SK-N-SH (cell line): ENCODE measurements at regions of chr16 and their contacts with region 1.

Region 1: DNA sequence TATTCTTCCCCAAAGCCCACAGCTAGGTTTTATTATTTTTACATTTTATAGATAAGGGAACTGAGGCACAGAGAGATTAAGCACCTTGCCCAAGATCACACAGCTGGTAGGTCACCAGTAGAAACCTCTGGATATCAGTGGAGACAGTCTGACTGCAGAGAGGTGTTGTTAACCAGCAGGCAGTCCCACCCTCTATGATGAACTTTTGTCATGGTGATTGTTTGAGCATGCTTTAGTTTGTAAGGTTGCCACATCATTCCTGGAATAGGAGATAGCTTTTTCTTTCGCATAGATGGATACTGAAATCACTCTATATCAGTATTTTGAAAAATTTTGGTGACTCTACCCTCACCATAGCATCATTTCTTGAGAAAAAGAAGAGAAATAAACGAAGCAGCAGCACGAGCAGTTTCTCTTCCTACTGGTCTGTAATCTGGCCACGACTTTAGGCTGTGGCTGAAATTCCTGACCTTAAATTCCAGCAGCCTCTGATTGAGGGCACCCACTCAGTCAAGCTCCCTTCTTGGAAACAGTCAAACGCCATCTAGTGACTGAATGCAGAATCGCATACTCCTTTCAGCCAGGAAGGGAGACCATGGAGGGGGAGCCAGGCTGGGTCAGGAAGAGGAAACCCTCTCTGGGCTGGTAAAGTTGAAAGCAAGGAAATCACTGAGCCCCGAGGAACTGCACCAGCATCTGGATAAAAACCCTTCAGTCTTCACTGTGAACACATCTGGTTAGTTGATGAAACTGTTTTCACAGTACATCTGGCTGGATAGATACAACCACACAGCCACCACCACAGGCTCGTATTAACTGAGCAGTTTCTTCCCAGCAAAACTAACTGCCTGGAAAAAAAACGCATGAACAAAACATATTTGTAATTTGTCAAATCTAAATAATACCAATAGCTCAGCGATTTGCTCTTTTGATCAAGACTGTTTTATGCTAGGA is 108.4 kb upstream of the XYLT1 start:
- DNase-seq: peak; percentile 66
- H3K4me3 ChIP-seq: peak overlapping the region in 1 of 2 experiments; percentile 15; a peak in 1 of 4 replicates
- H3K27ac ChIP-seq: peak overlapping the region in 1 of 2 experiments; percentile 62; a peak in 2 of 4 replicates
- H3K4me1 ChIP-seq: peaks cover 0 to 10% of the 10 kb centered on the region in 2 experiments; a peak in 1 of 4 replicates
- H3K27me3 ChIP-seq: no peaks in the 10 kb centered on the region
- CTCF ChIP-seq: peak; percentile 91
- EP300 ChIP-seq: no peak
- RAD21 ChIP-seq: peak; percentile 77

Region 2: GRCh38 chr16:17224879-17225281 is 354.3 kb before region 1 on chr16:
- CTCF ChIA-PET with region 1: no interaction called
- POLR2A ChIA-PET with region 1: no interaction called
- DNase-seq: no peak
- H3K4me3 ChIP-seq: no peak overlapping the region
- H3K27ac ChIP-seq: peak overlapping the region in 1 of 2 experiments; percentile 48; a peak in 1 of 4 replicates
- H3K4me1 ChIP-seq: peaks cover 0 to 28% of the 10 kb centered on the region in 2 experiments; a peak in 2 of 4 replicates
- H3K27me3 ChIP-seq: no peaks in the 10 kb centered on the region
- CTCF ChIP-seq: no peak
- EP300 ChIP-seq: no peak
- RAD21 ChIP-seq: no peak

Region 3: DNA sequence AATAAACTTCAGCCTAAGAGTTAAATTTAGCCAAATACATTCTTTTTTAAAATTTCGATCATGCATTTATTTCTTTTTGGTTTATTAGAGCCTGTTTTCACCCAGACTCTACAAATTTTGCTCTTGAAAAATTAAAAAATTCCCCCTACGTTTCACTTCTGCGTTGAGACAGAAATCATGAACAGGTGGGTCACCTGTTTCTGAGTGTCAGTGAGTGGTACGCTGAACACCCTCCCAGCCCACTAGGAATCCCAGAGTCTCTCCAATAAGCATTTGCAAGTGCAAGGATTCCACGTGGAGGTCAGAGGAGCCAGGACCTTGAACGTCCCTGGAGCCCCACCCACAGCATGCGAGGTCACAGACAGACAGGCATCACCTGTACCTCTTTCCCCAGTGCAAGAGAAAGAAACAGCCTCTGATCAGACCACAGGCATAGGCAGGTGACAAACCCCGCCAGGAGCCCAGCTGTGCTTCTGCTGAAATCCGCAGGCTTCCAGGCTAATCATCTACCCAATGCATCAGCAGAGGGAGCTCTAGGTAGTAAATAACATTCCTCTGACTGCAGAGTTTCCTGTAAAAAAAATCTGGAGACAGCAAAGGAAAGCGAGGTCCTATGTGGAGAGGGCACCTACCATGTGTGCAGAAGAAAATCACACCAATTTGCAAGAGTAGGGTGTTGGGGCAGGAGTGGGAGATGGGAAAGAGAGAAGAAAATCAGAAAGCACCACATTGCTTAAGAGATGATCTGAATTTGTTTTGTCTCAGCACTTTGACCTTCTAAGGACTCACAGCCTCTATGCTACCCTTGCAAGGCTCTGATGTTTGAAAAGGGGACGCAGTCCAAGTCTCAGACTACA is 102.6 kb before region 1 on chr16:
- CTCF ChIA-PET with region 1: interaction called, 23 read pairs
- POLR2A ChIA-PET with region 1: no interaction called
- DNase-seq: peak; percentile 79
- H3K4me3 ChIP-seq: no peak overlapping the region
- H3K27ac ChIP-seq: peak overlapping the region in 1 of 2 experiments; percentile 54; a peak in 1 of 4 replicates
- H3K4me1 ChIP-seq: peaks cover 13 to 17% of the 10 kb centered on the region in 2 experiments; a peak in 2 of 4 replicates
- H3K27me3 ChIP-seq: no peaks in the 10 kb centered on the region
- CTCF ChIP-seq: peak; percentile 78
- EP300 ChIP-seq: no peak; a peak in 2 of 4 replicates
- RAD21 ChIP-seq: peak; percentile 91

Region 4: DNA sequence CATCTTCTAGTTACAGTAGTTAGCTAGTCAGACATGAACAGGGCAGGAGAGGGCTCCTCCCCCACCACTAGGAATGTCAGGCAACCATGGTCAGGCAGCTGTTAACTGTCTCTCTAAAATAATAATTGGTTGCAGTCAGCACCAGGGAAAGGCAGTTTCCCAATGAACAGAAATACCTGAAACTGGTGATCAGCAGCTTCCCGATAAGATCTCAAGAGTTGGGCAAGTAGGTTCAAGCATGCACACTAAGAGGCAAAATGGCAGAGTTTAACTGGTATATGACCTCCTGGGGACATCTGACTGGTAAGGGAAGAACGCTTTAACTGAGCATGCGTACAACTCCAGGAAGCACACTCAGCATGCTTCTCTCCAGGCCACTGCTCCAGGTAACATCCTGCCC is 95.8 kb before region 1 on chr16:
- CTCF ChIA-PET with region 1: interaction called, 23 read pairs
- POLR2A ChIA-PET with region 1: no interaction called
- DNase-seq: no peak
- H3K4me3 ChIP-seq: no peak overlapping the region
- H3K27ac ChIP-seq: no peak overlapping the region
- H3K4me1 ChIP-seq: peaks cover 0 to 13% of the 10 kb centered on the region in 2 experiments; a peak in 1 of 4 replicates
- H3K27me3 ChIP-seq: no peaks in the 10 kb centered on the region
- CTCF ChIP-seq: no peak
- EP300 ChIP-seq: no peak
- RAD21 ChIP-seq: no peak

Region 5: GRCh38 chr16:17556276-17557052 is 22.7 kb before region 1 on chr16:
- CTCF ChIA-PET with region 1: interaction called, 21 read pairs
- POLR2A ChIA-PET with region 1: no interaction called
- DNase-seq: peak; percentile 58
- H3K4me3 ChIP-seq: no peak overlapping the region
- H3K27ac ChIP-seq: peak overlapping the region; percentile 11 to 89; a peak in 3 of 4 replicates
- H3K4me1 ChIP-seq: peaks cover 8 to 16% of the 10 kb centered on the region in 2 experiments; a peak in 3 of 4 replicates
- H3K27me3 ChIP-seq: no peaks in the 10 kb centered on the region
- CTCF ChIP-seq: peak; percentile 80
- EP300 ChIP-seq: no peak
- RAD21 ChIP-seq: peak; percentile 73

Region 6: DNA sequence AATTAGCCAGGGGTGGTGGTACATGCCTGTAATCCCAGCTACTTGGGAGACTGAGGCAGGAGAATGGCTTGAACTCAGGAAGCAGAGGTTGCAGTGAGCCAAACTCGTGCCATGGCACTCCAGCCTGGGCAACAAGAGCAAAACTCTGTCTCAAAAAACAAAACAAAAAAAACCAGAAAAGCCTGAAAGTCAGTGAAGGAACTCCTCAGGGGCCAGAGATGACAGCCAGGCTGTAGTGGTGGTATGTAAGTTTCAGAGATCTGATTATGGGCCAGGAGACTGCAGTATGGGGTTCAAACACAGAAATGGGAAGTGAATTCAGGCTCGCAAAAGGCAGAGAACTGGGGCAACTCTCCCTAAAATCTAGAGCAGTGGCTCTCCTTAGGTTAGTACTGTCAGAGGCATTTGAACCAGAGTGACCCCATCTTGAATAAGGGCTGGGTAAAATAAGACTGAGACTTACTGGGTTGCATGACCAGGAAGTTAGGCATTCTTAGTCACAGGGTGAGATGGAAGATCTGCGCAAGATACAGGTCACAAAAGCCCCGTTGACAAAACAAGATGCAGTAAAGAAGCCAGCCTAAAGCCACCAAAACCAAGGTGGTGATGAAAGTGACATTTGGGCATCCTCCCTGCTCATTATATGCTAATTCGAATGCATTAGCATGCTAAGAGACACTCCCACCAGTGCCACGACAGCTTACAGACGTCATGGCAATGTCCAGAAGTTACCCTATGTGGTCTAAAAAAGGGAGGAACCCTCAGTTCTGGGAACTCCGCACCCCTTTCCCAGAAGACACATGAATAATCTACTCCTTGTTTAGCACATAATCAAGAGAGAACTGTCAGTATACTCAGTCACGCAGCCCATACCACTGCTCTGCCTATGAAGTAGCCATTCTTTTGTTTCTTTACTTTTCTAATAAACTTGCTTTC is 11.8 kb after region 1 on chr16:
- CTCF ChIA-PET with region 1: interaction called, 33 read pairs
- POLR2A ChIA-PET with region 1: no interaction called
- DNase-seq: no peak
- H3K4me3 ChIP-seq: no peak overlapping the region
- H3K27ac ChIP-seq: peak overlapping the region; percentile 68 to 100
- H3K4me1 ChIP-seq: peaks cover 10 to 34% of the 10 kb centered on the region in 2 experiments
- H3K27me3 ChIP-seq: no peaks in the 10 kb centered on the region
- CTCF ChIP-seq: no peak
- EP300 ChIP-seq: no peak
- RAD21 ChIP-seq: no peak

Region 7: GRCh38 chr16:17628983-17629382 is 49.8 kb after region 1 on chr16:
- CTCF ChIA-PET with region 1: no interaction called
- POLR2A ChIA-PET with region 1: no interaction called
- DNase-seq: no peak
- H3K4me3 ChIP-seq: no peak overlapping the region
- H3K27ac ChIP-seq: no peak overlapping the region
- H3K4me1 ChIP-seq: peaks cover 0 to 2% of the 10 kb centered on the region in 2 experiments; a peak in 1 of 4 replicates
- H3K27me3 ChIP-seq: no peaks in the 10 kb centered on the region
- CTCF ChIP-seq: no peak
- EP300 ChIP-seq: no peak
- RAD21 ChIP-seq: no peak

Region 8: GRCh38 chr16:17691106-17691898 is 112.1 kb after region 1 on chr16:
- CTCF ChIA-PET with region 1: no interaction called
- POLR2A ChIA-PET with region 1: no interaction called
- DNase-seq: no peak
- H3K4me3 ChIP-seq: no peak overlapping the region
- H3K27ac ChIP-seq: peak overlapping the region in 1 of 2 experiments; percentile 87; a peak in 1 of 4 replicates
- H3K4me1 ChIP-seq: peaks cover 0 to 13% of the 10 kb centered on the region in 2 experiments; a peak in 2 of 4 replicates
- H3K27me3 ChIP-seq: peaks cover 5% of the 10 kb centered on the region
- CTCF ChIP-seq: no peak
- EP300 ChIP-seq: no peak
- RAD21 ChIP-seq: no peak